ENCODE measurements at regions of chr19 and their contacts with region 1.

Region 1: DNA sequence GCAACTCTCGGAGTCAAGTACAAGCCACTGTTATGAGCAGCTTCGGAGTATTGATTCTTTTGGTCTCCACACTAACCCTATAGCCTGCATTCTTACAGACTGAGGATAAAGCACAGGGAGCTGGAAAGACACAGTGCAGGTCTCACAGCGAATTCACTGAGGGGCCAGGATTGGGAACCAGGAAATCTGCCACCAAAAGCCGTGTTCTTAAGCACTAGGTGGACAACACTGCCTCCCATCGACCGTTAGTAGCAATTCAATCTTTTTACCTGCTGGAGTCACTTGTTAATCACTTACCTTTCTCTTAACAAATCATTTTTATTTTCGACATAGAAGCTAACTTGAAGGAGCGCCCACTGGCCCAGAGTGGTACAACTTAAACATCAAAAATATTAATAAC is 6.3 kb downstream of the PMIS2 start:
- DNase-seq: peak; percentile 53
- ATAC-seq: no peak
- H3K4me3 ChIP-seq: no peak overlapping the region
- H3K27ac ChIP-seq: no peak overlapping the region
- H3K4me1 ChIP-seq: peaks cover 17% of the 10 kb centered on the region
- H3K27me3 ChIP-seq: peaks cover 0 to 1% of the 10 kb centered on the region in 2 experiments; a peak in 1 of 5 replicates
- CTCF ChIP-seq: peak; percentile 82
- EP300 ChIP-seq: no peak
- POLR2A ChIP-seq: no peak
- RAD21 ChIP-seq: peak; percentile 62; the same call in 1 of the 2 replicates

Region 2: GRCh38 chr19:35545001-35545911 is 47.0 kb before region 1 on chr19 and contains the start of gene TMEM147:
- CTCF ChIA-PET with region 1: interaction called, 14 read pairs
- POLR2A ChIA-PET with region 1: no interaction called
- in situ Hi-C with region 1: no loop called
- intact Hi-C with region 1: no loop called
- DNase-seq: peak; percentile 72
- ATAC-seq: peak; percentile 91
- H3K4me3 ChIP-seq: peak within 1 kb of the TSS; percentile 89 to 96 (median 92)
- H3K27ac ChIP-seq: peak within 1 kb of the TSS; percentile 66
- H3K4me1 ChIP-seq: peaks cover 47% of the 10 kb centered on the region
- H3K27me3 ChIP-seq: no peaks in the 10 kb centered on the region; a peak in 1 of 5 replicates
- CTCF ChIP-seq: no peak
- EP300 ChIP-seq: no peak
- POLR2A ChIP-seq: peak; percentile 59 to 83
- RAD21 ChIP-seq: peak; percentile 14; the same call in 1 of the 2 replicates
- total RNA-seq, gene TMEM147: 85.8 and 141 TPM in 2 replicates

Region 3: GRCh38 chr19:35557539-35558399 is 34.5 kb before region 1 on chr19:
- CTCF ChIA-PET with region 1: interaction called, 10 read pairs
- POLR2A ChIA-PET with region 1: no interaction called
- in situ Hi-C with region 1: loop called (anchors 5 kb)
- intact Hi-C with region 1: loop called (anchors 5 kb)
- DNase-seq: no peak
- ATAC-seq: peak; percentile 46
- H3K4me3 ChIP-seq: peak overlapping the region in 2 of 3 experiments; percentile 36 to 56; a peak in 3 of 6 replicates
- H3K27ac ChIP-seq: no peak overlapping the region
- H3K4me1 ChIP-seq: peaks cover 33% of the 10 kb centered on the region
- H3K27me3 ChIP-seq: peaks cover 1 to 54% of the 10 kb centered on the region in 2 experiments; a peak in 3 of 5 replicates
- CTCF ChIP-seq: peak; percentile 63
- EP300 ChIP-seq: no peak
- POLR2A ChIP-seq: no peak
- RAD21 ChIP-seq: no peak